ENCODE measurements at regions of chr19 and their contacts with region 1.

Region 1: GRCh38 chr19:10380313-10381102 is at the start of gene TYK2:
- DNase-seq: peak; percentile 98
- ATAC-seq: peak; percentile 98
- H3K4me3 Mint-ChIP-seq: peak within 1 kb of the TSS; percentile 94
- H3K27ac Mint-ChIP-seq: peak within 1 kb of the TSS; percentile 96
- H3K4me1 Mint-ChIP-seq: peaks cover 21% of the 10 kb centered on the region
- H3K27me3 Mint-ChIP-seq: no peaks in the 10 kb centered on the region
- CTCF ChIP-seq: no peak
- total RNA-seq, gene TYK2: 143 TPM

Region 2: GRCh38 chr19:9934132-9934950 is 446.2 kb before region 1 on chr19:
- CTCF ChIA-PET with region 1: no interaction called
- POLR2A ChIA-PET with region 1: no interaction called
- intact Hi-C with region 1: loop called (anchors 10 kb)
- DNase-seq: peak; percentile 93
- ATAC-seq: peak; percentile 95
- H3K4me3 Mint-ChIP-seq: no peak overlapping the region
- H3K27ac Mint-ChIP-seq: no peak overlapping the region
- H3K4me1 Mint-ChIP-seq: peaks cover 24% of the 10 kb centered on the region
- H3K27me3 Mint-ChIP-seq: peaks cover 49% of the 10 kb centered on the region
- CTCF ChIP-seq: peak; percentile 96

Region 3: DNA sequence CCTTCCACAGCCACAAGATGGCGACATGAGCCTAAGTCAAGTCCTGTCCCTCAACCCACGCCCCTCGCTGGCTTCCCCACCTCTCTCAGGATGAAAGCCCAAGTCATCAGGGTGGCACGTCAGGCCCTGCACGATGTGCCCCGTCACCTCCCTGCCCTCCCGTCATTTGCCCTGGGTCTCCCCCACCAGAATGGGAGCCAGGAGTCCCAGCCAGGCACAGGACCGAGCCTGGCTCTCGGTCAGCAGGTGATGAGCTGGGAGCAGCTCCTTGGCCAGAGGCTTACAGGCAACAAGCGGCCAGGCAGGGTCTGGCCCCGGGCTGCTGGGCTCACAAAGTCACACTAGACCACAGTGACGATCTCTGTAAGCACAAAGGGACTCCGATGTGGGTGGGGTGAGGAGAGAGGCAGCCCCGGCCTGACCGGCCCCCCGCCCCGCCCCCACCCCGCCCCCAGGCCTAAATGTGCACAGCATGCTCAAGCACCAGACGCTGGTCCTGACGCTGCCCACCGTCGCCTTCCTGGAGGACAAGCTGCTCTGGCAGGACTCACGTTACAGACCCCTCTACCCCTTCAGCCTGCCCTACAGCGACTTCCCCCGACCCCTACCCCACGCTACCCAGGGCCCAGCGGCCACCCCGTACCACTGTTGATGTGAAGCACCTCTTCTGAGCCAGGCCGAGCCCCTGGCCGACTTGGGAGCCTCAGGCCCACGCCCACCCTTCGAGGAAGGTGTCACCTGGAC is 121.2 kb before region 1 on chr19:
- CTCF ChIA-PET with region 1: interaction called, 286 read pairs
- POLR2A ChIA-PET with region 1: interaction called, 16 read pairs
- intact Hi-C with region 1: no loop called
- DNase-seq: peak; percentile 100
- ATAC-seq: peak; percentile 80
- H3K4me3 Mint-ChIP-seq: peak overlapping the region; percentile 24
- H3K27ac Mint-ChIP-seq: peak overlapping the region; percentile 92
- H3K4me1 Mint-ChIP-seq: peaks cover 33% of the 10 kb centered on the region
- H3K27me3 Mint-ChIP-seq: no peaks in the 10 kb centered on the region
- CTCF ChIP-seq: peak; percentile 77

Region 4: GRCh38 chr19:10315335-10316214 is 64.9 kb before region 1 on chr19 and contains the start of gene FDX2:
- CTCF ChIA-PET with region 1: no interaction called
- POLR2A ChIA-PET with region 1: no interaction called
- intact Hi-C with region 1: no loop called
- DNase-seq: peak; percentile 95
- ATAC-seq: peak; percentile 93
- H3K4me3 Mint-ChIP-seq: peak within 1 kb of the TSS; percentile 93
- H3K27ac Mint-ChIP-seq: peak within 1 kb of the TSS; percentile 77
- H3K4me1 Mint-ChIP-seq: peaks cover 16% of the 10 kb centered on the region
- H3K27me3 Mint-ChIP-seq: no peaks in the 10 kb centered on the region
- CTCF ChIP-seq: no peak
- total RNA-seq, gene FDX2: 8.1 to 14.3 TPM

Region 5: GRCh38 chr19:10332955-10333757 is 47.4 kb before region 1 on chr19 and contains the start of gene RAVER1:
- CTCF ChIA-PET with region 1: no interaction called
- POLR2A ChIA-PET with region 1: interaction called, 4 read pairs
- intact Hi-C with region 1: loop called (anchors 10 kb)
- DNase-seq: peak; percentile 99
- ATAC-seq: peak; percentile 97
- H3K4me3 Mint-ChIP-seq: peak within 1 kb of the TSS; percentile 97
- H3K27ac Mint-ChIP-seq: peak within 1 kb of the TSS; percentile 98
- H3K4me1 Mint-ChIP-seq: peaks cover 38% of the 10 kb centered on the region
- H3K27me3 Mint-ChIP-seq: no peaks in the 10 kb centered on the region
- CTCF ChIP-seq: no peak
- total RNA-seq, gene RAVER1: 105 to 111 TPM

Region 6: DNA sequence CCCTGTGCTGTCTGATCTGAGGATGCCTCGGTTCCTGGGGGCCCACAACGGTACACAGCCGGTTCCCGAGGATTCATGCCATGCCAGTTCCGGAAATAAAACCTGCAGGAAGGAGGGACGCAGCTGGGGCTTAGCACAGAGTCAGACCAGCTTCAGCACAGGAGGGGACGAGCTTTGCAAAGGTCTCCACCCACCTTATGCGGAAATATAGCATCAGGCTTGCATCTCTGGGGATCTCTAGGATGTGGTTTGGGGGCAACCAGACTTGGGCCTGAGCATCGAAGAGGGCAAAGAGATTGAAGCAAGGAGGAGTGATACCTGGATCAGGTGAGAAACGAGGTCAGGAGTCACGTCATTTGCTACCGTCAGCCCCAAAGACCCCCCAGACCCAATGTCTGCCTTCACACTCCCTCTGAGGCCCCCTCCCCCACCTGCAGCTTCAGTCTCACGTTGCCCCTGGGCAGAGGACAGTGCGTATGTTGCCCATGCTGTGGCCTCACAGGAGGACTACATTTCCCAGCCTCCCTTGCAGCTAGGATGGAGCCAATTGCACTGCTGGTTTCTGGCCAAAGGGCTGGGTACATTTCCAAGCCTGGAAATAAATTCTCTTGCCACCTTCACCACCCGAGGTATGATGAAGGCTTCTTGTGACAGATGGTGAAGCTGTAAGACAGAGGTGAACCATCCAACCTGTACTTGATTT is 12.3 kb before region 1 on chr19:
- CTCF ChIA-PET with region 1: no interaction called
- POLR2A ChIA-PET with region 1: interaction called, 13 read pairs
- intact Hi-C with region 1: no loop called
- DNase-seq: peak; percentile 36
- ATAC-seq: peak; percentile 74
- H3K4me3 Mint-ChIP-seq: no peak overlapping the region
- H3K27ac Mint-ChIP-seq: peak overlapping the region; percentile 8
- H3K4me1 Mint-ChIP-seq: peaks cover 6% of the 10 kb centered on the region
- H3K27me3 Mint-ChIP-seq: no peaks in the 10 kb centered on the region
- CTCF ChIP-seq: no peak

Measured in activated CD8-positive, alpha-beta T cell treated with anti-CD3 and anti-CD28 coated beads for 36 hours (primary cell).